ENCODE measurements at regions of chr15 and their contacts with region 1.

Region 1: GRCh38 chr15:101258238-101259144 is 6.6 kb upstream of the CHSY1 start:
- DNase-seq: peak; percentile 53 to 79 (median 61)
- H3K4me3 ChIP-seq: no peak overlapping the region
- H3K27ac ChIP-seq: no peak overlapping the region
- H3K4me1 ChIP-seq: peaks cover 5% of the 10 kb centered on the region
- H3K27me3 ChIP-seq: no peaks in the 10 kb centered on the region
- CTCF ChIP-seq: peak; percentile 69 to 93 (median 92)
- EP300 ChIP-seq: no peak
- POLR2A ChIP-seq: no peak

Region 2: GRCh38 chr15:100537331-100537730 is 721.2 kb before region 1 on chr15:
- intact Hi-C with region 1: no loop called
- DNase-seq: no peak
- H3K4me3 ChIP-seq: no peak overlapping the region
- H3K27ac ChIP-seq: no peak overlapping the region
- H3K4me1 ChIP-seq: no peaks in the 10 kb centered on the region
- H3K27me3 ChIP-seq: no peaks in the 10 kb centered on the region
- CTCF ChIP-seq: no peak
- EP300 ChIP-seq: no peak
- POLR2A ChIP-seq: no peak

Region 3: GRCh38 chr15:100918034-100918689 is 340.3 kb before region 1 on chr15:
- intact Hi-C with region 1: loop called in 2 of 4 experiments (anchors 5 kb)
- DNase-seq: peak; percentile 59 to 83 (median 76)
- H3K4me3 ChIP-seq: peak overlapping the region; percentile 50
- H3K27ac ChIP-seq: peak overlapping the region in 1 of 2 donors; percentile 83
- H3K4me1 ChIP-seq: peaks cover 5% of the 10 kb centered on the region
- H3K27me3 ChIP-seq: no peaks in the 10 kb centered on the region
- CTCF ChIP-seq: peak; percentile 79 to 89 (median 88)
- EP300 ChIP-seq: no peak
- POLR2A ChIP-seq: no peak

Region 4: GRCh38 chr15:101000271-101000681 is 258.2 kb before region 1 on chr15:
- intact Hi-C with region 1: no loop called
- DNase-seq: no peak
- H3K4me3 ChIP-seq: no peak overlapping the region
- H3K27ac ChIP-seq: no peak overlapping the region
- H3K4me1 ChIP-seq: no peaks in the 10 kb centered on the region
- H3K27me3 ChIP-seq: no peaks in the 10 kb centered on the region
- CTCF ChIP-seq: no peak
- EP300 ChIP-seq: no peak
- POLR2A ChIP-seq: no peak

Region 5: GRCh38 chr15:101014921-101015841 is 243.3 kb before region 1 on chr15:
- intact Hi-C with region 1: loop called (anchors 1 to 5 kb)
- DNase-seq: peak; percentile 77 to 87 (median 84)
- H3K4me3 ChIP-seq: no peak overlapping the region
- H3K27ac ChIP-seq: no peak overlapping the region
- H3K4me1 ChIP-seq: no peaks in the 10 kb centered on the region
- H3K27me3 ChIP-seq: no peaks in the 10 kb centered on the region
- CTCF ChIP-seq: peak in 2 of 3 donors; percentile 77 to 83
- EP300 ChIP-seq: no peak
- POLR2A ChIP-seq: no peak

Region 6: DNA sequence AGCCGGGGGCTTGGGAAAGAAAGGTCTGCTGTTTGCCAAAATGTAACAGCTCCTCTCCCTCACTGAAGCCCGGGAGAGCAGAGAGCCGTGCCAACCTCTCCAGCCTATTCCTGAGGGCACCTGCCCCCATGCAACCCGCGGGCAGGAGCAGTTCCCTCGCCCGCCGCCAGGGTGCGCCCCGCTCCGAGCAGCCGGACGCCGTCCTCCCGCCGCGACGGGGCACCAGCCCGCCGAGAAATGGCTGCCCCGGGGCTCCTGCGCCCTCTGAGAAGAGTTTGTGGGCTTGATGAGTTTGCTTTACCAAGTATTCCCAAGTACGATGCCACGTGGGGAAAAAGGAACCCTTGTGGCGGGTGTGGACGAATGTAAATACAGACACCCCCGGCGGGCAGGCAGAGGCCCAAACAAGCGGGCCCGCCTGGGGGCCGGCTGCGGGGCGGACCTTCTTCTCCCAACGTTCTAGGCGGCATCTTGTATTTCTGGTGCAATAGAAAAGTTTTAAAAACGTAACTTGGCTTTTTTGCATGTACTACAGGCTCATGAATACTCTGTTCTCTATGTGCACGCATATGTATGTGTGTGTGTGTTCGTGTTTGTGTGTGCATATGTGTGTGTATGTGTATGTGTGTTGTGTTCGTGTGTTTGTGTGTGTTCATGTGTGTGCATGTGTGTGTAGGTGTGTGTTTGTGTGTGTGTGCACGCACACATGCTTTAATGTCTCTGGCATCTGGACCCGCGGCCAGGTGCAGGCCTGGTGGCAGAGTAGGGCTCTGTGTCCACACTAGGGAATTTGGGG is 169.5 kb before region 1 on chr15:
- intact Hi-C with region 1: loop called in 3 of 4 experiments (anchors 2 to 5 kb)
- DNase-seq: peak; percentile 51 to 82 (median 75)
- H3K4me3 ChIP-seq: peak overlapping the region; percentile 30
- H3K27ac ChIP-seq: peak overlapping the region in 1 of 2 donors; percentile 18
- H3K4me1 ChIP-seq: peaks cover 17% of the 10 kb centered on the region
- H3K27me3 ChIP-seq: no peaks in the 10 kb centered on the region
- CTCF ChIP-seq: peak; percentile 84 to 97 (median 93)
- EP300 ChIP-seq: no peak
- POLR2A ChIP-seq: no peak

Region 7: GRCh38 chr15:101426881-101427280 is 168.4 kb after region 1 on chr15:
- intact Hi-C with region 1: no loop called
- DNase-seq: no peak
- H3K4me3 ChIP-seq: no peak overlapping the region
- H3K27ac ChIP-seq: no peak overlapping the region
- H3K4me1 ChIP-seq: no peaks in the 10 kb centered on the region
- H3K27me3 ChIP-seq: no peaks in the 10 kb centered on the region
- CTCF ChIP-seq: no peak
- EP300 ChIP-seq: no peak
- POLR2A ChIP-seq: no peak